ENCODE measurements at regions of chr12 and their contacts with region 1.

Region 1: GRCh38 chr12:79531122-79531913 is 159.4 kb downstream of the PAWR start:
- DNase-seq: no peak
- ATAC-seq: no peak
- H3K4me3 ChIP-seq: no peak overlapping the region
- H3K27ac ChIP-seq: no peak overlapping the region
- H3K4me1 ChIP-seq: no peaks in the 10 kb centered on the region
- H3K27me3 ChIP-seq: no peaks in the 10 kb centered on the region
- CTCF ChIP-seq: no peak

Region 2: GRCh38 chr12:79407671-79408622 is 123.4 kb before region 1 on chr12:
- intact Hi-C with region 1: no loop called
- DNase-seq: peak in 1 of 2 donors; percentile 37
- ATAC-seq: peak in 7 of 8 donors; percentile 51 to 86 (median 63)
- H3K4me3 ChIP-seq: no peak overlapping the region
- H3K27ac ChIP-seq: no peak overlapping the region
- H3K4me1 ChIP-seq: peaks cover 0 to 7% (median 0%) of the 10 kb centered on the region in 9 donors
- H3K27me3 ChIP-seq: no peaks in the 10 kb centered on the region
- CTCF ChIP-seq: peak in 8 of 9 donors; percentile 25 to 69 (median 54)

Region 3: DNA sequence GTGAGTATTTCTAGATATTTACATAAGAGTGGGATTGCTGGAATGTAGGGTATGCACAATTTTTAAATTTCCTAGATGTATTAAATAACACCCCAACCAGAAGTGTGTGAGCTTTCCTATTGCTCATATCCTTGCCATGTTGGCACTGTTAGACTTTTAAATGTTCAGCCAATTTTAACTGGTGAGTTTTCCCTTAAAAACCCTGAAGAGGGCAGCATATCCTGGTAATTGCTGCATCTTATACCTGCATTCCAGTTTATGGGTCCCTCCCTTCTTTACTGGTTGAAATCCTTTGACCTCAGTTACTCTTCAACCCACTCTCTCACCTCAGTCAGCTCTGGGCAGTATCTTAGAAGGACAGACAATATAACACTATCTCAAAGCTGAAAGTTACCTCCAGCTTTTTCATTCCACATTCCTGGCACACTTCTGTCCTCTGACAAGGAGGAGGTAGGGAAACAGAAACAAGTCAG is 111.1 kb before region 1 on chr12:
- intact Hi-C with region 1: loop called in 1 of 10 experiments (anchors 10 kb)
- DNase-seq: no peak
- ATAC-seq: peak in 2 of 8 donors; percentile 29 to 44
- H3K4me3 ChIP-seq: no peak overlapping the region
- H3K27ac ChIP-seq: no peak overlapping the region
- H3K4me1 ChIP-seq: peaks cover 0 to 15% (median 0%) of the 10 kb centered on the region in 9 donors
- H3K27me3 ChIP-seq: no peaks in the 10 kb centered on the region
- CTCF ChIP-seq: peak in 7 of 9 donors; percentile 20 to 56 (median 36)

Measured in heart right ventricle (tissue), 16 donors.